ENCODE measurements at regions of chr15 and their contacts with region 1.

Region 1: GRCh38 chr15:72554471-72555425 is 80.6 kb downstream of the ARIH1 start:
- DNase-seq: no peak
- H3K4me3 ChIP-seq: no peak overlapping the region
- H3K27ac ChIP-seq: no peak overlapping the region
- H3K4me1 ChIP-seq: no peaks in the 10 kb centered on the region
- H3K27me3 ChIP-seq: no peaks in the 10 kb centered on the region

Region 2: DNA sequence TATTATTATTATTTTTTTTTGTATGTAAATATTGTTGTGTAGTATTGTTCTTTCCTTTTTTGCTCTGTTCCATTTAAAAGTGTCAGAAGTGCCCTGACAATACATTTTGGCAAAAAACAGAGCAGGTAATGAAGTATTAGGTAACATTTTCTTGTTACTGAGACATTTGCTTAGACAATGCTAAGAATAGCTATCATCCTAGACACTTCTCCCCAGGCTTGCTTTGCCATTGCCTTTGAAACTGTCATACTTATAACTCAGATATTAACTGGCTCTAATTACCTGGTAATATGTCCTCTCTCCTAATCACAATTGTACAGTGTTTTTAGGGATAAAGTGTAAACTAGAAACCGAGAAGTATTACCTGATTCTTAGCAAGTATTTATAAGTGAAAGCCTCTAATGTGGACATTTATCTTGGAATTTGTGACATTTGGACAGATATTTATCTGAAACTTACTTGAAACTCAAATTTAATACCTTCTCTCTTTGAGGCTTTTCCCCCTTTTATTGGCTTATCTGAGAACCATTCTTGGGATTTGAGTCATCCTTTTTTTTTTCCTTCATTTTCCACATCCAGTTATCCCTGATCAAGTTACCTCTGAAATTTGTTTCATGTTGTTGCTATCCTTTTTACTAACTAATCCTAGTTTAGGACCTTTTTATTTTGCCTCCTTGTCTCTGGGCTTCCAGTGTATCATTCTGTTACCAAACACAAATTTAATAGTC is 67.5 kb before region 1 on chr15:
- CTCF ChIA-PET with region 1: no interaction called
- POLR2A ChIA-PET with region 1: no interaction called
- DNase-seq: no peak
- H3K4me3 ChIP-seq: no peak overlapping the region
- H3K27ac ChIP-seq: no peak overlapping the region
- H3K4me1 ChIP-seq: peaks cover 0 to 10% (median 2%) of the 10 kb centered on the region in 4 experiments
- H3K27me3 ChIP-seq: no peaks in the 10 kb centered on the region

Region 3: DNA sequence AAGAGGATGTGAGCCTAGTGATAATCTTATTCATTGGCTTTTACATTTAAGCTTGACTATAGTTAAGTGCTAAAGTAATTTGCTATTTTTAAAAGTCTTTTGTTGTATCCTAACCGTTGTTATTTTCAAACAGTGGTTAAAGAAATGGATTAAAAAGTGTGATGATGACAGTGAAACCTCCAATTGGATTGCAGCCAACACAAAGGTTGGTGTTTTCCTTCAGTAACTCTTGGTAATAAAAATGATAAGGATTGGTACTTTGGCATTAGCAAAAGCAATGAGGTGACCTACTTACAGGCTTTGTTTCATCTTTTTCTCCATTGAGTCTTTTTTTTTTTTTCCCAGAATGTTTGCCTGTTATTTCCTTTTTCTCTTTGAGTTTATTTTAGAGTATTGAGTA is 12.2 kb after region 1 on chr15:
- CTCF ChIA-PET with region 1: interaction called, 10 read pairs
- POLR2A ChIA-PET with region 1: no interaction called
- DNase-seq: no peak
- H3K4me3 ChIP-seq: no peak overlapping the region
- H3K27ac ChIP-seq: no peak overlapping the region
- H3K4me1 ChIP-seq: peaks cover 0 to 10% (median 2%) of the 10 kb centered on the region in 4 experiments
- H3K27me3 ChIP-seq: no peaks in the 10 kb centered on the region

Region 4: DNA sequence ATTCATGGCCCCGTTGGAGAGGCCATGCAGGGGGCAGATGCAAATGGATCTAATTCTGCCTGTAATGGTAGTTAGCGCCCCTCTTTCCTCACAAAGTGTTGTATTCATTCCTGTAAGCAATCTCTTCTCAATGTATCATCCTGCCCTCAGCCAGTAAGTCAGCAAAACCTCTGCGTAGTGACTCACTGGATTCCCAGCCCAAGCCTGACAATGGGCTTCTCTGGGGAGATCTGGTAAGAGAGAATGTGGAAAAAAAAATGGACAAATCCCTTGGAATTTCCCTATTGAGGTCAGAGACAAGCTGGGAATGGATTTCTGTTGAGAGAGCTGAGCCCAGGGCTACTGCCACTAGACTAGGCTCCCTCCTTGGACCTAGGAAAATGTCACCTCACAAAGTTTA is 203.4 kb after region 1 on chr15:
- CTCF ChIA-PET with region 1: no interaction called
- POLR2A ChIA-PET with region 1: no interaction called
- DNase-seq: peak in 1 of 3 donors; percentile 22
- H3K4me3 ChIP-seq: peak overlapping the region in 1 of 7 experiments; percentile 20
- H3K27ac ChIP-seq: no peak overlapping the region
- H3K4me1 ChIP-seq: peaks cover 0 to 19% (median 15%) of the 10 kb centered on the region in 4 experiments
- H3K27me3 ChIP-seq: no peaks in the 10 kb centered on the region